ENCODE measurements at regions of chr10 and their contacts with region 1.

Region 1: GRCh38 chr10:12181065-12181775 is 14.5 kb downstream of the NUDT5 start:
- DNase-seq: peak; percentile 62
- H3K4me3 Mint-ChIP-seq: peak overlapping the region; percentile 30
- H3K27ac Mint-ChIP-seq: peak overlapping the region; percentile 72
- H3K4me1 Mint-ChIP-seq: peaks cover 44% of the 10 kb centered on the region
- H3K27me3 Mint-ChIP-seq: no peaks in the 10 kb centered on the region

Region 2: GRCh38 chr10:12042797-12043651 is 138.2 kb before region 1 on chr10 and contains the start of gene UPF2:
- intact Hi-C with region 1: loop called (anchors 1 kb)
- DNase-seq: peak; percentile 94
- H3K4me3 Mint-ChIP-seq: peak within 1 kb of the TSS; percentile 99
- H3K27ac Mint-ChIP-seq: peak within 1 kb of the TSS; percentile 99
- H3K4me1 Mint-ChIP-seq: peaks cover 34% of the 10 kb centered on the region
- H3K27me3 Mint-ChIP-seq: no peaks in the 10 kb centered on the region
- total RNA-seq, gene UPF2: 38.9 and 43.6 TPM in 2 replicates

Region 3: DNA sequence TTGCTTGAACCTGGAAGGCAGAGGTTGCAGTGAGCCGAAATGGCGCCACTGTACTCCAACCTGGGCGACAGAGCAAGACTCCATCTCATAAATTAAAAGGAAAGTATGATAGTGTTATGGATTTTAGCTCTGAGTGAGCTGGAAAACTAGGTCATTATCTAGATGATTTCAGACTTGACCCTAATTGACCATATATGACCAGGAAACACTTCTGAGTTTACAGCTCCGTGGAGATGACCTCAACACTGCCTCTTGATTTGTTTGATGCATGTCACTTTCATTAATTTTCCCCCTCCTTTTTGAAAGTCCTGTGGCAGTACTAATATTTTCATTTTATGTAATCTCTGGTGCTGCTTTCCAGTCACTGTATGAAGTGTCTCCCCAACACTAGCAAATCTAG is 59.5 kb before region 1 on chr10:
- intact Hi-C with region 1: loop called (anchors 1 kb)
- DNase-seq: no peak
- H3K4me3 Mint-ChIP-seq: peak overlapping the region; percentile 59
- H3K27ac Mint-ChIP-seq: peak overlapping the region; percentile 95
- H3K4me1 Mint-ChIP-seq: peaks cover 34% of the 10 kb centered on the region
- H3K27me3 Mint-ChIP-seq: no peaks in the 10 kb centered on the region

Region 4: DNA sequence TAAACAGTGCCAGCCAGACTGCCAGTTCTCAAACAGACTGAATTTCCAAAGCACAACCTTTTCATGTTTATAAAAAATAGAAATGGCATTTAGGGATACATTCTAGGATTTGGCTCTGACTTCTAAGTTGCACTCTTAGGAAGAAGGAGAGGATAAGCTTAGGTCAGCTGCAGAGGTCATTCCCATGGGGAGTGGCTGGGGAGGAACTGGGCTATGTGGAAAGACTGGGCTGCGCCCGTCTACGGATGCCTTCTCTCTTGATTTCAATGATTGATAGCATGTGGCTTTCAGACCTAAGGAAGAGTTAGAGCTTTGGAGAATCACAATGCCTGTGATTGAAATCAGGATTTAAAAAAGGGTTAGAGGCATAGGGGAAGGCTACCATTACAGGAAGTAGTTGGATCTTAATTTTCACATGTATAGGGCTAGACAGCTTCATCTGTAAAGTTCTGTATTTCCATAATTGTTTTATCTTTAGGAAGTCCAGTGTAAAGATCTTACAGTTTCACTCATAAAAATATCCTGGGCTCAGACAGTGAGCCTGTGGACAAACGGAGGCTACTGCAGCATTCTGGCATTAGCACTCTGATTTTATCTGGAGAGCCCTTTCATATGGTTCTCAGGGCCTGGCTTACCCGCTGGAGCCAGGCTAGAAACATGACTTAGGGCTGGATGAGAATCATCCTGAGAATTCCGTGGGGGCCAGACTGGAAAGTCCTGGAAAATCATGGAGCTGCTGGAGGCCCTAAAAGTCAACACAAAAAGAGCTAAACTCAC is 15.0 kb before region 1 on chr10:
- intact Hi-C with region 1: no loop called
- DNase-seq: no peak
- H3K4me3 Mint-ChIP-seq: no peak overlapping the region
- H3K27ac Mint-ChIP-seq: no peak overlapping the region
- H3K4me1 Mint-ChIP-seq: no peaks in the 10 kb centered on the region
- H3K27me3 Mint-ChIP-seq: peaks cover 2% of the 10 kb centered on the region

Measured in activated T-helper 1 cell treated with anti-CD3 and anti-CD28 coated beads, Interleukin-12 subunit alpha, Interleukin-12 subunit beta, Interleukin-2, Interleukin-4 antibody, amounts not matched to agents 30 ng/mL and 10 ng/mL and 1 ng/mL, durations not matched to agents 14 hours and 24 hours and 36 hours (primary cell).